A673 (cell line): ENCODE measurements at regions of chr7 and their contacts with region 1.

Region 1: GRCh38 chr7:31811650-31812461 is 124.8 kb downstream of the PPP1R17 start:
- DNase-seq: peak; percentile 27
- H3K4me3 ChIP-seq: no peak overlapping the region
- H3K27ac ChIP-seq: no peak overlapping the region
- H3K4me1 ChIP-seq: no peaks in the 10 kb centered on the region
- H3K27me3 ChIP-seq: peaks cover 16% of the 10 kb centered on the region
- CTCF ChIP-seq: no peak

Region 2: DNA sequence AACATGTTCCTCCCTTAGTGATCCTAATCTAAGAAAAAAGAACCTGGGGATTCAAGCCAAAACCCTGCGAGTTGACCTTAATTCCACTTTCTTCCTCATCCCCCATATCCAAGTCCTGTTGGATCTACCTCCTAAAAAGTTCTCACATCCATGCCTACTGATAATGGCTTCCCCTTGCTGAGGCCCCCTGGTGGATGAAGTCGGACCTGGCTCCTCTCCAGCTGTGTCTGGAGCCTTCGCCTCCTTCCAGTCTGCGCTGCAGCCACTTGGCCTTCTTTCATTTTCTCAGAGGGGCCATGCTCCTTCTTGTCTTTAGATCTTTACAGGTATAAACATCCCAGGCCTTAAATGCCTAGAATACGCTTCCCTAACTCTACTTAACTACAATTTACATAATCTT is 250.3 kb after region 1 on chr7:
- CTCF ChIA-PET with region 1: no interaction called
- POLR2A ChIA-PET with region 1: no interaction called
- intact Hi-C with region 1: loop called (anchors 10 kb)
- DNase-seq: peak; percentile 80
- H3K4me3 ChIP-seq: no peak overlapping the region
- H3K27ac ChIP-seq: no peak overlapping the region
- H3K4me1 ChIP-seq: peaks cover 35% of the 10 kb centered on the region
- H3K27me3 ChIP-seq: peaks cover 74% of the 10 kb centered on the region
- CTCF ChIP-seq: peak; percentile 82